AG04450 (cell line): ENCODE measurements at regions of chr16 and their contacts with region 1.

Region 1: DNA sequence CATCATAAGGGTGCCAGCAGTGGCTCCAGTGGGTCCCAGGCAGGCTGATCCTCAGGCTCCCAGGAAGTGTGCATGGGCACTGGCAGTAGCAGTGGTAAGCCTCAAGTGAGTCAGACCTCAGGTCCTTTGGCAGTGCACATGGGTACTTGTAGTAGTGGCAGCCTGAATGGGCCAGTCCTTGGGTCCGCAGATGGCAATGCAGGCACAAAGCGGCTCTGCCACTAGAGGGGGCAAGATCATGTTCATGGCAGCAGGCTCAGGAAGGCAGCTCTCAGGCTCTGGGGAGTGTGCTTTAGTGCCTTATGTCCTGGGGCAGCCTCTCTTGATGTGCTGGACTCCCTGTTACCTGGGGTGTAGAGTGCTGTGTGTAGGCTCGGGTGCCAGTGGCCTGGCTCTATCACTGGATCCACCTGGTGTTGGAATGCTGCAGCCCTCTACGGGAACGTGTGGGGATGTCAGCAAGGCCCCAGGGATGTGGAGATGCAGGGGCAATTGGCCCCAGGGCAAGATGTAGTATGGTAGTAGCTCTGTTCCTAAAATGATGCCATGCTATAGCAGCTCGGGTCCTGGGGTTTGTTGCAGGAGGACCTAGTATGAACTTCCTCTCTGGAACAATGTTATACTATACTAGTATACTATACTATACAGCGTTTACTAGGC is 11.0 kb downstream of the ACSM3 start:
- DNase-seq: peak; percentile 6
- H3K4me3 ChIP-seq: no peak overlapping the region
- H3K27ac ChIP-seq: no peak overlapping the region
- H3K27me3 ChIP-seq: no peaks in the 10 kb centered on the region
- CTCF ChIP-seq: peak; percentile 72

Region 2: DNA sequence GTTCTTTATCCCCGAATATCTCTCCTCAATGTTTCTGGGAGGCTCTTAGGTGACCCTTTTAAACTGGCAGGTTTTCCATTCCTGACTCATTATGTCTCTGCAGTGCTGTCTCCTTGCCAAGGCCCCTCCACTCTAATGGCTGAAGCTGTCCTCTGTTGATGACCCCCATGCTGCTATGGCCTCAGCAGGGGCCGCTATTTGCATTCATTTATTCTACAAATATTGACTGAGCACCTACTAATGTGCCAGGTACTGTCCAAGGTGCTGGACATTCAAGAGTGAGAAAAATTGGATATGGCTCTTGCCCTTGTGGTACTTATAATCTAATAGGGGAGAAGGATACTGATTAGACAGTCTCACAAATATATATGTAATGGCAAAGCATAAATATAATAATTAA is 502.9 kb before region 1 on chr16:
- CTCF ChIA-PET with region 1: no interaction called
- POLR2A ChIA-PET with region 1: no interaction called
- DNase-seq: no peak
- H3K4me3 ChIP-seq: no peak overlapping the region
- H3K27ac ChIP-seq: no peak overlapping the region
- H3K27me3 ChIP-seq: no peaks in the 10 kb centered on the region
- CTCF ChIP-seq: no peak

Region 3: DNA sequence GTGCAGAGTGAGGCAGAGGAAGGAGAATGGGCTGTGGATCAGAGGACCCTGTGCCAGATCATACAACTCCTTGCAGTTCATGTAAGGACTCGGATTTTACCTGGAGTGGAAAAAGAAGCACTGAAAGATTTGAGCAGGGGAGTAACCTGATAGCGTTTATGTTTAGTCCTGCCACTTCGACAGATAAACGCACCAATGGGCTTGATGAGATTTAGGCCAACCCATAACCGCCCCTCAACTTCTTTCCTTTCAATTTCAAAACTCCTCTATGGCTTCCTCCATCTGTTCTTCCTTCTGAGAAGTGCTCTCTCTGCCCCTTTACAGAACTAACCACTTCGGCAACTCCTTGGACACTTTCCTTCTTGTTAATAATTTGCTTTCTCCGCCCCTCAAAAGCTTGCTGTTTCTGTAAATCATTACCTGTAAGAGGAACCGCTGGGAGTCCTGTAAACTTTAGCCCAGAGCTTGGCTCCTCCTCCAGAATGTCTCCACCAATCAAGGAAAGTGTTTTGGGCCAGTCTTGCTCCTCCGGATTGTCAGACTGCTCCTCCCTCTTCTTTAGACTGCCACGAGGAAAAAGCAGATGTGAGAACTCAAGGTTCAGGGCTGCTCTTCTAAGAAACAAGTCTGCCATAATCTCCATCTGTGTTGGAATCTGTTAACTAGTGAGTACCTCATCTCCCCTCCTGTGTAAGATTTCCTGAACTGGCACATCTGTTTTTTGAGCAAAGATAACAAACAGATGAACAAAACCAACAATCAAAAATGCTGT is 11.2 kb before region 1 on chr16 and contains the start of gene ACSM3:
- CTCF ChIA-PET with region 1: interaction called, 19 read pairs
- POLR2A ChIA-PET with region 1: no interaction called
- DNase-seq: peak; percentile 59
- H3K4me3 ChIP-seq: peak within 1 kb of the TSS; percentile 63
- H3K27ac ChIP-seq: no peak within 1 kb of the TSS
- H3K27me3 ChIP-seq: no peaks in the 10 kb centered on the region
- CTCF ChIP-seq: no peak
- polyA plus RNA-seq, gene ACSM3: 0.45 and 0.76 TPM in 2 replicates